Activated CD8-positive, alpha-beta T cell treated with anti-CD3 and anti-CD28 coated beads, Interleukin-2, amount 10 ng/mL, durations not matched to agents 7 days and 5 days (primary cell): ENCODE measurements at regions of chrX and their contacts with region 1.

Region 1: GRCh38 chrX:132219343-132219768 is at the start of gene RAP2C:
- DNase-seq: peak; percentile 73
- ATAC-seq: peak; percentile 43
- H3K4me3 Mint-ChIP-seq: peak within 1 kb of the TSS; percentile 87
- H3K27ac Mint-ChIP-seq: peak within 1 kb of the TSS; percentile 92
- H3K4me1 Mint-ChIP-seq: peaks cover 15% of the 10 kb centered on the region
- H3K27me3 Mint-ChIP-seq: no peaks in the 10 kb centered on the region
- total RNA-seq, gene RAP2C: 27.4 to 32.2 TPM

Region 2: GRCh38 chrX:131827935-131828334 is 391.4 kb before region 1 on chrX:
- CTCF ChIA-PET with region 1: interaction called, 12 read pairs
- POLR2A ChIA-PET with region 1: no interaction called
- DNase-seq: peak; percentile 53
- ATAC-seq: peak; percentile 65
- H3K4me3 Mint-ChIP-seq: peak overlapping the region; percentile 51
- H3K27ac Mint-ChIP-seq: peak overlapping the region; percentile 31
- H3K4me1 Mint-ChIP-seq: peaks cover 28% of the 10 kb centered on the region
- H3K27me3 Mint-ChIP-seq: no peaks in the 10 kb centered on the region

Region 3: GRCh38 chrX:131841496-131842410 is 377.6 kb before region 1 on chrX:
- CTCF ChIA-PET with region 1: interaction called, 26 read pairs
- POLR2A ChIA-PET with region 1: no interaction called
- DNase-seq: peak; percentile 40
- ATAC-seq: peak; percentile 70
- H3K4me3 Mint-ChIP-seq: no peak overlapping the region
- H3K27ac Mint-ChIP-seq: peak overlapping the region; percentile 49
- H3K4me1 Mint-ChIP-seq: no peaks in the 10 kb centered on the region
- H3K27me3 Mint-ChIP-seq: no peaks in the 10 kb centered on the region

Region 4: GRCh38 chrX:131854581-131854980 is 364.8 kb before region 1 on chrX:
- CTCF ChIA-PET with region 1: interaction called, 14 read pairs
- POLR2A ChIA-PET with region 1: no interaction called
- DNase-seq: no peak
- ATAC-seq: no peak
- H3K4me3 Mint-ChIP-seq: no peak overlapping the region
- H3K27ac Mint-ChIP-seq: no peak overlapping the region
- H3K4me1 Mint-ChIP-seq: no peaks in the 10 kb centered on the region
- H3K27me3 Mint-ChIP-seq: no peaks in the 10 kb centered on the region

Region 5: GRCh38 chrX:132092439-132093065 is 126.8 kb before region 1 on chrX:
- CTCF ChIA-PET with region 1: interaction called, 60 read pairs
- POLR2A ChIA-PET with region 1: no interaction called
- DNase-seq: peak; percentile 58
- ATAC-seq: peak; percentile 64
- H3K4me3 Mint-ChIP-seq: no peak overlapping the region
- H3K27ac Mint-ChIP-seq: no peak overlapping the region
- H3K4me1 Mint-ChIP-seq: peaks cover 13% of the 10 kb centered on the region
- H3K27me3 Mint-ChIP-seq: no peaks in the 10 kb centered on the region

Region 6: DNA sequence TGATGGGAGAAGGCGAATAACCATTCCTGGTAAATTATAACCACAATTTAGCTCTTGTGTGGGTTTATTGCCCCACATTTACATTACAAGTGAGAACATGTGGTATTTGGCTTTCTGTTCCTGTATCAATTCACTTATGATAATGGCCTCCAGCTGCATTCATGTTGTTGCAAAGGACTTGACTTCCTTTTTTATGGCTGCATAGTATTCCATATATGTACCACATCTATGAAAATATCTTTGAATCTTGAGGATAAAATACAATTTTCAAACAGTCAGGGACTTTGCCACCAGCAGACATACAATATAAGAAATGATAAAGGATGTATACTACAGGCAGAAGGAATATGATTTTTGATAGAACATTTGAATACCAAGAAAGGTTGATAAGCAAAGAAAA is 27.4 kb before region 1 on chrX:
- CTCF ChIA-PET with region 1: no interaction called
- POLR2A ChIA-PET with region 1: no interaction called
- DNase-seq: no peak
- ATAC-seq: no peak
- H3K4me3 Mint-ChIP-seq: no peak overlapping the region
- H3K27ac Mint-ChIP-seq: no peak overlapping the region
- H3K4me1 Mint-ChIP-seq: no peaks in the 10 kb centered on the region
- H3K27me3 Mint-ChIP-seq: no peaks in the 10 kb centered on the region

Region 7: DNA sequence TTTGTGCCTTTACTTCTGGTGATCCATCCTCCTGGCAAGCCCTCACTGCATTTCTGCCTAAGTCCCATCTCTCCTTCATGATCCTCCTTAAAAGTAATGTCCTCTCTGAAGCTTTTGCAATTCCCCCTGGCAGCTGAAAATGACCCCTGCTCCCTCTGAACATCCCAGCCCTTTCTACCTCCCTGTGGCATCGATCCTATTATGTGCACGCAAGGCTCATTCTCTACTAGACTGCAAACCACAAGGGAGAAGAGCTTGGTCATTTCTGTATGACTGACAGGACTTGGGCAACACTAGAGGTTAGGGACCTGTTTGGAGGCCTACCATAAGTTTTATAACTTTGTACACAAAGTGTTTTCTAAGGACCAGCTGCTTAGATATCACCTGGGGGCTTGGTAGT is 50.7 kb after region 1 on chrX:
- CTCF ChIA-PET with region 1: no interaction called
- POLR2A ChIA-PET with region 1: no interaction called
- DNase-seq: no peak
- ATAC-seq: no peak
- H3K4me3 Mint-ChIP-seq: no peak overlapping the region
- H3K27ac Mint-ChIP-seq: no peak overlapping the region
- H3K4me1 Mint-ChIP-seq: peaks cover 2% of the 10 kb centered on the region
- H3K27me3 Mint-ChIP-seq: no peaks in the 10 kb centered on the region

Region 8: GRCh38 chrX:132367984-132368756 is 148.8 kb after region 1 on chrX:
- CTCF ChIA-PET with region 1: no interaction called
- POLR2A ChIA-PET with region 1: no interaction called
- DNase-seq: no peak
- ATAC-seq: no peak
- H3K4me3 Mint-ChIP-seq: no peak overlapping the region
- H3K27ac Mint-ChIP-seq: no peak overlapping the region
- H3K4me1 Mint-ChIP-seq: no peaks in the 10 kb centered on the region
- H3K27me3 Mint-ChIP-seq: no peaks in the 10 kb centered on the region